Caco-2 (cell line): ENCODE measurements at regions of chr7 and their contacts with region 1.

Region 1: DNA sequence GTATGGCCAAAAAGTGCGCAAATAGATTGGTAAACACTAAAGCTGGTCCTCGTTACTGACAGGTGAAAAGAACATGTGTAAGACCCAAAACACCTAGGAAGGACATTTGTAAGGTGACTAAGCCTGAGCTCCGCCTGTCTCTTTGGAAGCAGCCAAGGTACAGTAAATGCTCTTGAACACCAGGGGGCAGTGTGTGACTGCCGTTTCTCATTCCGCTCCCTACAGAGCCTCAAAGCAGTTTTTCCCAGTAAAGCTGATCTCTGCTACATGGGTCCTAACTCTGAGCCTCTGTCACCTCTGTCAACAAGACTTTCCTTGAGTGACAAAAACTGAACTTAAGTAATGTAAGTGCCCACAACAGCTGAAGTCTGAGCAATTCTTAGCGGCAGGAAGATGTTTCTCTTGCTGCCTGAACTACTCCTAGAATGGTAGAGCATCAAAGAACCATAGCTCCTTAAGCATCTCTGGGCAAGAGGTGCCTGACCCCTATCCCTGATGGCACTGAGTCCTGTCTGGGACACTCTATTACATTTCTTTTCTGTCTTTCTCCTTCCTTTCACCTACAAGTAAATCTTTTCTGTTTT is 238.0 kb upstream of the INHBA start:
- DNase-seq: peak; percentile 69 to 76
- H3K4me3 ChIP-seq: no peak overlapping the region
- H3K4me3 Mint-ChIP-seq: no peak overlapping the region
- H3K27ac Mint-ChIP-seq: no peak overlapping the region
- H3K4me1 ChIP-seq: peaks cover 21% of the 10 kb centered on the region
- H3K4me1 Mint-ChIP-seq: peaks cover 19% of the 10 kb centered on the region
- H3K27me3 ChIP-seq: no peaks in the 10 kb centered on the region
- H3K27me3 Mint-ChIP-seq: peaks cover 16% of the 10 kb centered on the region
- CTCF ChIP-seq: peak; percentile 83 to 85

Region 2: DNA sequence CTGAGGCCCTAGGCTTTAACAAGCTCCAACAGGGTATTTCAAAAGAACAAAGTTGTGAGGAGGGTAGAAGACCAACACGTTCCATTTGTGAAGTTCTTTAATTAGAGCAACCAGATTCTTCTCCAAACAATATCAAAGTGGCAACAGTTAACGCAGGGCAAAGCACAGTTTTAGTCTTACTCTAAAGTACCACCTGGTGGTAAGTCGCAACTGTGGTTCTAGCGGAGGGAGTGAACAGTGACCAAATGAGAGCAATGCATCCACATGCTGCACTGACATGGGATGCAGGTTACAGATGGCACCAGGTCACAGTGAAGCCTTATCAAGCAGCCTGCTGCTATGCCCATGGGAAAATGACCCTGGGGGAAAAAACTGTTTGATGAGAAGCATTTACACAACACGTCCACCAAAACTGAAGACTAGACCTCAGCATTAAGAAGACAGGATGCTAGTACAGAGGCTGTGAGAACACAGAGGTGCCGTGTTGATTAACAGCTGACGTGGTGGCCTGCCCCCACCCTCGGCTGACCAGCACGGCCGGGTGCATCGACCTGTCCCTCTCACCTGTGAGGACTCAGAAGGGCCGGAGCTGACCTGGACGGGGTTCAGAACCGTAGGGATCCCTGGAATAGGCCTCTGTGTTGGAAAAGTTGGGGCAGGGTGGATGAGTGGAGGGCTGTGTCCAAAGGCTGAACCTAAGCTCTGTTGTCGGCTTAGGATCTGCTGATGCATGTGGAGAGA is 85.0 kb after region 1 on chr7:
- CTCF ChIA-PET with region 1: interaction called, 3 read pairs
- POLR2A ChIA-PET with region 1: no interaction called
- intact Hi-C with region 1: loop called (anchors 5 kb)
- DNase-seq: no peak
- H3K4me3 ChIP-seq: no peak overlapping the region
- H3K4me3 Mint-ChIP-seq: no peak overlapping the region
- H3K27ac Mint-ChIP-seq: no peak overlapping the region
- H3K4me1 ChIP-seq: no peaks in the 10 kb centered on the region
- H3K4me1 Mint-ChIP-seq: no peaks in the 10 kb centered on the region
- H3K27me3 ChIP-seq: no peaks in the 10 kb centered on the region; the same call in 1 of the 2 replicates
- H3K27me3 Mint-ChIP-seq: peaks cover 18% of the 10 kb centered on the region
- CTCF ChIP-seq: no peak

Region 3: DNA sequence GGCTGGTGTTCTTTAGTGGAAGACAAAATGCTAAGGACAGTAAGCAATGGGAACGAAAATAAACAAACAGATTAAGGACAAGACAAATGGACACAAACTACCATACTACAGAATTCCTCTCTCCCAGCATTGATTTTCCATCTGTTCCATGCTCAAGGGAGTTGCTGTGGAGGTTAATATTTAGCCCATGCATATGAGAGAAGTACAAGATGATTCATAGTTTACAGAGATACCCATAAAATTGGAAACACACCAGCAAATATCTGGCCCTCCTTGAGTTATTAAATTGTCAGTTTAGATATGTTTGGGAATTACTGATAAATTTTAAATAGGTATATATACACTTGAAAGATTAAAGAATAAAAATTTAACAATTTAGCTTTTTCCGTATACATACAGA is 226.4 kb after region 1 on chr7:
- CTCF ChIA-PET with region 1: no interaction called
- POLR2A ChIA-PET with region 1: no interaction called
- intact Hi-C with region 1: loop called (anchors 5 kb)
- DNase-seq: no peak
- H3K4me3 ChIP-seq: no peak overlapping the region
- H3K4me3 Mint-ChIP-seq: no peak overlapping the region
- H3K27ac Mint-ChIP-seq: no peak overlapping the region
- H3K4me1 ChIP-seq: no peaks in the 10 kb centered on the region
- H3K4me1 Mint-ChIP-seq: no peaks in the 10 kb centered on the region
- H3K27me3 ChIP-seq: no peaks in the 10 kb centered on the region
- H3K27me3 Mint-ChIP-seq: peaks cover 4% of the 10 kb centered on the region
- CTCF ChIP-seq: no peak

Region 4: GRCh38 chr7:42690794-42691639 is 750.2 kb after region 1 on chr7:
- CTCF ChIA-PET with region 1: interaction called, 5 read pairs
- POLR2A ChIA-PET with region 1: no interaction called
- intact Hi-C with region 1: loop called (anchors 1 kb)
- DNase-seq: peak; percentile 30 to 42
- H3K4me3 ChIP-seq: no peak overlapping the region
- H3K4me3 Mint-ChIP-seq: no peak overlapping the region
- H3K27ac Mint-ChIP-seq: no peak overlapping the region
- H3K4me1 ChIP-seq: no peaks in the 10 kb centered on the region
- H3K4me1 Mint-ChIP-seq: no peaks in the 10 kb centered on the region
- H3K27me3 ChIP-seq: peaks cover 1% of the 10 kb centered on the region; the same call in 1 of the 2 replicates
- H3K27me3 Mint-ChIP-seq: peaks cover 5% of the 10 kb centered on the region
- CTCF ChIP-seq: peak; percentile 31 to 62

Region 5: GRCh38 chr7:42843205-42843800 is 902.5 kb after region 1 on chr7:
- CTCF ChIA-PET with region 1: interaction called, 10 read pairs
- POLR2A ChIA-PET with region 1: no interaction called
- intact Hi-C with region 1: loop called (anchors 1 kb)
- DNase-seq: peak; percentile 41 to 44
- H3K4me3 ChIP-seq: no peak overlapping the region
- H3K4me3 Mint-ChIP-seq: no peak overlapping the region
- H3K27ac Mint-ChIP-seq: no peak overlapping the region
- H3K4me1 ChIP-seq: no peaks in the 10 kb centered on the region
- H3K4me1 Mint-ChIP-seq: no peaks in the 10 kb centered on the region
- H3K27me3 ChIP-seq: no peaks in the 10 kb centered on the region; the same call in 1 of the 2 replicates
- H3K27me3 Mint-ChIP-seq: peaks cover 13% of the 10 kb centered on the region
- CTCF ChIP-seq: peak; percentile 39 to 56